CD8-positive, alpha-beta T cell (primary cell): ENCODE measurements at regions of chr3 and their contacts with region 1.

Region 1: DNA sequence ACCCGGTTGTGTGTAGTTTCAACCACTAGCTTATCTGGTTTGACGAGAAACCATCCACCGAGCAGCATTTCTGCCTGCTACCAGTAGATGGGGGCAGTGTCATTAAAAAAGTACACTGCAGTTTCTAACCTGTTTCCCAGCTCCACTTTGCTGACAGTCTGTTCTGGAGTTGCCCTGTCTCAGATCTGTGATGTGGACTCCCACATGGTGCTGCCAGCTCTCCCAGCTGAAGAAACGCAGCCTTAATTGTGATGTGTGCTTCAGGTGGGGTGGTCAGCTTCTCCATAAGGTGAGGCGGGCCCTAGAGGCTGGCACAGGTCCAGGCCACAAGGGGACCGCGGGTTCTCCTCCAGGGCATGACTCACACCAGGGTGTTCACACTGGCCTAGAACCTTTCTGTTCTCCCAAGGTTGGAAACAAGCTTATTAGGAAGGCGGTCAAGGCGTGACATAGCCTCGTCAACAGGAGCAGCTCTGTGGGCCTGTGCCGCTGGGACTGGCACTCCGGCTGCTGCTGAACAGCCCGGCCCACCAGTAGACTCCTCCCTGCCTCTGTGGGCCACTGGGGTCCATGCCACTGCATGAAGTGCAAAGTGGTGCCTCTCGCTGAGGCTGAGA is 2.9 kb upstream of the FAM43A start:
- DNase-seq: peak in 8 of 9 experiments; percentile 53 to 85 (median 70)
- ATAC-seq: peak; percentile 73
- H3K4me3 ChIP-seq: no peak overlapping the region
- H3K4me3 Mint-ChIP-seq: no peak overlapping the region
- H3K27ac ChIP-seq: no peak overlapping the region
- H3K27ac Mint-ChIP-seq: no peak overlapping the region
- H3K4me1 ChIP-seq: peaks cover 31% of the 10 kb centered on the region
- H3K4me1 Mint-ChIP-seq: peaks cover 36% of the 10 kb centered on the region
- H3K27me3 ChIP-seq: no peaks in the 10 kb centered on the region
- H3K27me3 Mint-ChIP-seq: peaks cover 10% of the 10 kb centered on the region
- CTCF ChIP-seq: peak; percentile 72

Region 2: GRCh38 chr3:194235160-194235559 is 447.6 kb before region 1 on chr3:
- CTCF ChIA-PET with region 1: no interaction called
- POLR2A ChIA-PET with region 1: no interaction called
- intact Hi-C with region 1: no loop called
- DNase-seq: no peak
- ATAC-seq: no peak
- H3K4me3 ChIP-seq: no peak overlapping the region
- H3K4me3 Mint-ChIP-seq: no peak overlapping the region
- H3K27ac ChIP-seq: no peak overlapping the region
- H3K27ac Mint-ChIP-seq: no peak overlapping the region
- H3K4me1 ChIP-seq: no peaks in the 10 kb centered on the region
- H3K4me1 Mint-ChIP-seq: no peaks in the 10 kb centered on the region
- H3K27me3 ChIP-seq: no peaks in the 10 kb centered on the region
- H3K27me3 Mint-ChIP-seq: peaks cover 13% of the 10 kb centered on the region
- CTCF ChIP-seq: no peak

Region 3: DNA sequence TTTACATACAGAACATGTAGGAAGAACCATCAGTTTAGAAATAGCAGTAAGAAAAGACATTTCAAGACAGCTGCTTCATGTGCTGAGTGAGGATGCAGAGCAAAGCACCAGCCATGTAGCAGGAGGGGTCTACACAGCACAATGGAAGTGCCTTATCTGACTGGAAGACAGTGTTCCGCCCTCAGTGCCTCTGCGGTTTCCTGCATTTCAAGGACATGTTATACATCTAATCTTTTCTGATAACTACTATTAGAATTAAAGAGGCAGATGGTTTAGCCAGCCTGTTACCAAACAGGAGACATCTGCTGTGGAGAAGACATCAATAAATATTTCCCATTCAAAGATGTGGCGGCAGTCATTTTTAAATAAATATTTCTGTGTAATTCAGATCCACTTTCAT is 21.4 kb before region 1 on chr3:
- CTCF ChIA-PET with region 1: interaction called, 11 read pairs
- POLR2A ChIA-PET with region 1: no interaction called
- intact Hi-C with region 1: no loop called
- DNase-seq: no peak
- ATAC-seq: no peak
- H3K4me3 ChIP-seq: no peak overlapping the region
- H3K4me3 Mint-ChIP-seq: no peak overlapping the region
- H3K27ac ChIP-seq: no peak overlapping the region
- H3K27ac Mint-ChIP-seq: no peak overlapping the region
- H3K4me1 ChIP-seq: no peaks in the 10 kb centered on the region
- H3K4me1 Mint-ChIP-seq: peaks cover 12% of the 10 kb centered on the region
- H3K27me3 ChIP-seq: no peaks in the 10 kb centered on the region
- H3K27me3 Mint-ChIP-seq: no peaks in the 10 kb centered on the region
- CTCF ChIP-seq: no peak

Region 4: GRCh38 chr3:194731506-194732075 is 48.8 kb after region 1 on chr3:
- CTCF ChIA-PET with region 1: no interaction called
- POLR2A ChIA-PET with region 1: no interaction called
- intact Hi-C with region 1: no loop called
- DNase-seq: no peak
- ATAC-seq: no peak
- H3K4me3 ChIP-seq: no peak overlapping the region
- H3K4me3 Mint-ChIP-seq: no peak overlapping the region
- H3K27ac ChIP-seq: no peak overlapping the region
- H3K27ac Mint-ChIP-seq: no peak overlapping the region
- H3K4me1 ChIP-seq: peaks cover 8% of the 10 kb centered on the region
- H3K4me1 Mint-ChIP-seq: no peaks in the 10 kb centered on the region
- H3K27me3 ChIP-seq: no peaks in the 10 kb centered on the region
- H3K27me3 Mint-ChIP-seq: peaks cover 43% of the 10 kb centered on the region
- CTCF ChIP-seq: no peak

Region 5: DNA sequence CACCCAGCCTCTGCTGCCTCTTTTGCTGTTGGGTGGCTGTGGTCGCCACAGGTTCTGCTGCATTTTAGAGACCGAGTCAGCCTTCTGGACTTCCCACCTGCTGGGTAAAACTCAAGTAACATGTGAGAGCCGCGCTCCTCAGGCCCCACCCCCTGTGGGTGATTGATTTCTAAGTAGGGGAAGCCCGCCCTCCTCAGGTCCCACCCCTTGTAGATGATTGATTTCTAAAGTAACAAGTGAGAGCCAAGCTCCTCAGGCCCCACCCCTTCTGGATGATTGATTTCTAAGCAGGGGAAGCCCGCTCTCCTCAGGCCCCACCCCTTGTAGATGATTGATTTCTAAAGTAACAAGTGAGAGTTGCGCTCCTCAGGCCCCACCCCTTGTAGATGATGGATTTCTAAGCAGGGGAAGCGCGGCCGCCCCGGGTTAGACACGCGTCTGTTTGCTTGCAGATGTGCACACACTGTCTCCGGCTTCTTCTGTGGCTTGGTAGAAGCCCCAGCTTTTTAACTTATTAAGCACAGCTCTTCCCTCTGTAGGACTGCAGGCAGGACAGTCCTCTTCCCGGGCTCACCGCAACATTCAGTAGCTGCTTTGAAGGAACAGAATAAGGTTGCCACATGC is 86.3 kb after region 1 on chr3:
- CTCF ChIA-PET with region 1: interaction called, 4 read pairs
- POLR2A ChIA-PET with region 1: interaction called, 10 read pairs
- intact Hi-C with region 1: loop called (anchors 2 kb)
- DNase-seq: peak; percentile 82 to 98 (median 89)
- ATAC-seq: peak; percentile 96
- H3K4me3 ChIP-seq: peak overlapping the region; percentile 45 to 51
- H3K4me3 Mint-ChIP-seq: peak overlapping the region; percentile 84
- H3K27ac ChIP-seq: peak overlapping the region; percentile 15 to 71
- H3K27ac Mint-ChIP-seq: peak overlapping the region; percentile 92
- H3K4me1 ChIP-seq: peaks cover 11% of the 10 kb centered on the region
- H3K4me1 Mint-ChIP-seq: peaks cover 26% of the 10 kb centered on the region
- H3K27me3 ChIP-seq: peaks cover 0 to 2% of the 10 kb centered on the region in 2 experiments
- H3K27me3 Mint-ChIP-seq: peaks cover 7% of the 10 kb centered on the region
- CTCF ChIP-seq: no peak

Region 6: DNA sequence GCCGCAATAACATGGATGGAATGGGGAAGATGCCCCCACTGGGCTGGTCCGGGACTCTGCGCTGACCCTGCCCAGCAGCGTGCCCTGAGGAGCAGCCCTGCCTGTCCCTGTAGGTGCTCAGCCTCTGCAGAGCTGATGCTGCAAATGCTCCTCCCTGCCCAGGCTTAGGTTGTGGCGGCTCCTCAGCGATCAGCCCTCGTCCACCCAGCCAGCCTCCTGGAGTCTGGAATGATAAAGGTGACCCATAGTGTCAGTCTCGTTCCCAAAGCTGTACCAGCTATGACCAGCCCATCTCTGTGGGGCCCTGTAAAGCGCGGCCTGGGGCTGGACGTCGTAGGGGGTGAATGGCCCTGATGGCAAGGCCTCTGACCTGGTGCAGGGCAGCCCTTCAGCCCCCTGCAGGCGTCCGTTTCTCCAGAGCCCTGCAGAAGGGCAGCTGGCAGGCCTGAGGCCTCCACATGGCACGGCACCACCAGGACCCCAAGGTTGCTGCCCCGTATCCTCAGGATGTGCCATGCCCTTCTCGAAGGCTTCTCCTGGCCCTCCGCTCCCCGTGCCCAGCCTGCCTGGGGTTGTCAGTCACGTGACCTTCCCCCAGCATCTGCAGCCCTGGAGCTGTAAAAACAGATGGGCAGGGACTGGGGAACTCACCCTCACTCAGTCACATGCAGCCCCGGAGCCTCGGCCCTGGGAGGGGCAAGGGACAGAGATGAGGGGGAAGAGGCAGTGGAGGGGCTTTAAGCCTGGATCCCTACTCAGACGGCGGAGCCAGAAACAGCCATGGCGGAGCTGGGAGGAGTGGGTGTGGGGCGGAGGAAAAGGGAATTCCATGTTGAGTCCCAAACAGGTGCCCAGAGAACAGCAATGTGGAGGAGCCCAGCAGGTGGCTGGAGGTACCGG is 394.8 kb after region 1 on chr3:
- CTCF ChIA-PET with region 1: interaction called, 10 read pairs
- POLR2A ChIA-PET with region 1: no interaction called
- intact Hi-C with region 1: no loop called
- DNase-seq: no peak
- ATAC-seq: no peak
- H3K4me3 ChIP-seq: no peak overlapping the region
- H3K4me3 Mint-ChIP-seq: no peak overlapping the region
- H3K27ac ChIP-seq: no peak overlapping the region
- H3K27ac Mint-ChIP-seq: no peak overlapping the region
- H3K4me1 ChIP-seq: no peaks in the 10 kb centered on the region
- H3K4me1 Mint-ChIP-seq: peaks cover 6% of the 10 kb centered on the region
- H3K27me3 ChIP-seq: no peaks in the 10 kb centered on the region
- H3K27me3 Mint-ChIP-seq: no peaks in the 10 kb centered on the region
- CTCF ChIP-seq: no peak

Region 7: DNA sequence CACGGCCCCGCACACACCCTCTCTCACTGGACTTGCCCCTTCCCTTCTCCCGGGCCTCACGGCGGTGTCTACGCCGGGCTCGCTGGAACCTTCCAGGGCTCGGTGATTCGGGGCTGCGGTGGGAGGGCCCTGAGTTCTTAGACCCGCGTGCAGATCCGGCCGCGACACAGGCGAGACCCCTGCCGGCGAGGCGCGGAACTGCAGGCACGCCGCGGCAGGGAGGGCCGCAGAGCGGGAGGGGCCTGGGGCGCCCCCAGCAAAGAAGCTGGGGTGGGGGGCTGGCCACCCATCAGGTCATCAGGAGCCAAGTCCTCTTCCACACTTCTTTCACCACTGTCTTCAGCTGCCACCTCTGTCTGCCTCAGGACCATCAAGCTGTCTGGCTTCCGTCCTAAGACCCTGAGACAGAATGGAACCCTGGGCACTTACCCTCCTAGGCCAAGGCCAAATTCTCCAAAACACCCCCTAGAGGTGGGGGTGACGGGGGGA is 423.7 kb after region 1 on chr3:
- CTCF ChIA-PET with region 1: interaction called, 98 read pairs
- POLR2A ChIA-PET with region 1: interaction called, 4 read pairs
- intact Hi-C with region 1: loop called (anchors 1 kb)
- DNase-seq: peak; percentile 42 to 85 (median 66)
- ATAC-seq: peak; percentile 100
- H3K4me3 ChIP-seq: peak overlapping the region in 1 of 2 experiments; percentile 44
- H3K4me3 Mint-ChIP-seq: peak overlapping the region; percentile 51
- H3K27ac ChIP-seq: no peak overlapping the region
- H3K27ac Mint-ChIP-seq: no peak overlapping the region
- H3K4me1 ChIP-seq: no peaks in the 10 kb centered on the region
- H3K4me1 Mint-ChIP-seq: peaks cover 4% of the 10 kb centered on the region
- H3K27me3 ChIP-seq: no peaks in the 10 kb centered on the region
- H3K27me3 Mint-ChIP-seq: no peaks in the 10 kb centered on the region
- CTCF ChIP-seq: peak; percentile 99

Region 8: DNA sequence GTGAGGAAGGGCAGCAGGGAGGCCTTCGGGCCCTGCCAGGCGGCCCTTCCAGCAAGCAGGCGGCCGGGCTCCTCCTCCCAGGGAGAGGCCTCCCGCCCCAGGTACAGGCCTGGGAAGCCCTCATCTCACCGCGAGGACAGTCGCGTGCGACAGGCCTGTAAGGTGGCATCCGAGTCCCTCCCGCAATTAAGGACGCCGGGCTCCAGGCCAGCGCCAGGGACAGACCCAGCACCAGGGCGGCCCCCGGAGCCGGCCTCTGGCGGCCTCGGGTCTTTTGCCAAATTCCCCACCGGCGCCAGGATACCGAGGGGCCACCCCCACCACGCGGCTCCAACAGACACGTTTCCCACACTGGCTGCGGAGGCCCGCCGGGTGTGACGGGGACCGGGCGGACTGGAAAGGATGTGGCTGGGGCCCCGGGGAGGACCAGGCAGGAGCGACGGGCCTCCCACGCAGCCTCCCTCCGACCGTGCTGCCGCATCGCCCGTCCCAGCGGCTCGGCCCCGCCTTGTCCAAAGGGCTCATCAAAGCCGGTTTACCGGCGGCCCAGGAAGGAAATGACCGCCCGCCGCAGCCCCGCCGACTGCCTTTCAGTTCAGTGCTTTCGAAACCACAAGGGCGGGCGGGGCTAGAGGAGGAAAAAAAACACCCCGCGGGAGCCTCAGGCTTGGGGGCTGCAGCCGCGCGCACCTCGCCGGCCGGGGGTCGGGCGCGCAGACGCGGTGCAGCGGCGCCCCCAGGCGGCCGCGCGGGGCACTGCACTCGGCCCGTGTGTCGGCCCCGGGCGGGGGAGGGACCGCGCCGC is 576.9 kb after region 1 on chr3:
- CTCF ChIA-PET with region 1: interaction called, 56 read pairs
- POLR2A ChIA-PET with region 1: interaction called, 5 read pairs
- intact Hi-C with region 1: loop called (anchors 1 to 2 kb)
- DNase-seq: peak; percentile 82 to 95 (median 93)
- ATAC-seq: peak; percentile 91
- H3K4me3 ChIP-seq: peak overlapping the region; percentile 74 to 86
- H3K4me3 Mint-ChIP-seq: peak overlapping the region; percentile 72
- H3K27ac ChIP-seq: peak overlapping the region; percentile 60 to 86
- H3K27ac Mint-ChIP-seq: peak overlapping the region; percentile 87
- H3K4me1 ChIP-seq: peaks cover 32% of the 10 kb centered on the region
- H3K4me1 Mint-ChIP-seq: peaks cover 18% of the 10 kb centered on the region
- H3K27me3 ChIP-seq: no peaks in the 10 kb centered on the region
- H3K27me3 Mint-ChIP-seq: no peaks in the 10 kb centered on the region
- CTCF ChIP-seq: peak; percentile 71

Region 9: GRCh38 chr3:195522254-195523023 is 839.6 kb after region 1 on chr3:
- CTCF ChIA-PET with region 1: interaction called, 4 read pairs
- POLR2A ChIA-PET with region 1: no interaction called
- intact Hi-C with region 1: loop called in 1 of 2 experiments (anchors 5 kb)
- DNase-seq: peak in 3 of 9 experiments; percentile 52 to 65 (median 56)
- ATAC-seq: peak; percentile 30
- H3K4me3 ChIP-seq: no peak overlapping the region
- H3K4me3 Mint-ChIP-seq: no peak overlapping the region
- H3K27ac ChIP-seq: no peak overlapping the region
- H3K27ac Mint-ChIP-seq: peak overlapping the region; percentile 75
- H3K4me1 ChIP-seq: peaks cover 35% of the 10 kb centered on the region
- H3K4me1 Mint-ChIP-seq: peaks cover 46% of the 10 kb centered on the region
- H3K27me3 ChIP-seq: no peaks in the 10 kb centered on the region
- H3K27me3 Mint-ChIP-seq: no peaks in the 10 kb centered on the region
- CTCF ChIP-seq: peak; percentile 93

Region 10: DNA sequence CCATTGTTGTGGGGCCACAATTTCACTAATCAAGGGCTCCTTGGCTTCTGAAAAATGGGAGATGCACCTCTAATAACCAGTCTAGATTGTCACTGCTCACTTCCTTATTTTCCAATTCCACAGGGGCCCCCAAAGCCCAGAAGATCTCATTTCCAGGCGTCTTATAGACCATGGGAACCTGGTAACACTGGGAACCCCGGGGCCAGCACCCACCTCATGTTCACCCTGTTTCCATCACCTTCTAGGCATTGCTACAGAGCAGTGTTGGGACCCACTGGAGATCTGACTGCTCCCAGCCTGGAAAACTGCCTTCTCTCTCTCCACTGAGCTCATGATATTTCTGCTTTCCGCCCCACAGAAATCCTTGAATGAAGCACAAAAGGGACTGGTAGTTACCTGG is 1337.6 kb after region 1 on chr3:
- CTCF ChIA-PET with region 1: no interaction called
- POLR2A ChIA-PET with region 1: no interaction called
- intact Hi-C with region 1: no loop called
- DNase-seq: no peak
- ATAC-seq: no peak
- H3K4me3 ChIP-seq: no peak overlapping the region
- H3K4me3 Mint-ChIP-seq: no peak overlapping the region
- H3K27ac ChIP-seq: no peak overlapping the region
- H3K27ac Mint-ChIP-seq: no peak overlapping the region
- H3K4me1 ChIP-seq: no peaks in the 10 kb centered on the region
- H3K4me1 Mint-ChIP-seq: no peaks in the 10 kb centered on the region
- H3K27me3 ChIP-seq: no peaks in the 10 kb centered on the region
- H3K27me3 Mint-ChIP-seq: peaks cover 2% of the 10 kb centered on the region
- CTCF ChIP-seq: no peak